Sciatic nerve (tissue), 2 donors: ENCODE measurements at regions of chr7 and their contacts with region 1.

Region 1: DNA sequence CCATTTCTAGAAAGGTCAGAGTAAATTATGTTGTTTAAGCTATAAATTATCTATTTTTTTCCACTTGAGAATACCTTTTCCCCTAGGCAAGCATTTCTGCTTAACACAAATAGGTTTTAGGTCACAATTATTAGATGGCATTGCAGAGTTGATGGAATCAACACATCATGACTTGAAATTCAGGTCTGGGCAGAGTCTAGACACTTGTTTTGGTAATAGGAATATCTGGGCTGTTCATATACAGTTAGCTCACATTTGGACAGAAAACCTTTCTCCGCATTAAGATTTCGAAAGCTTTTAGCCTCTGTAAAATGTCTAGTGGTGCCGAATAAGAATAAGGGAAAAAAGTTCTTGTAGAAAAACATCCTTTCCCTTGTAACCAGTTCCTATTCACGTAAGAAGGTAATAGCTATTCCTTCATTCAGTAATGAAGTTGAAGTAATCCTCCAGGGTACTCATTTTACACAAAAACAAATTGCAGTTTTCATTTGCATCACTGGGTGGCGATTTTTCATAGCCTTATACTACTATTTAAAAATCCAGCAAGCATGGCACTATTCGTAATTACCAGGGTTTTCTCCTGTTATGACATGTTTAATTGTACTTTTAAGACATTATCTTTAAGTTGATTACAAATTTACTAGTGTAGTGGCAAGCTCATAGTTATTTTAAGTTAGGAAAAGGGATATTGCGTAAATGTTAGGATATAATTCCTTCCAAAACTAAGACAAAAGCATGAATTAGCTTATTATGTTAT is 37.0 kb downstream of the RPA3 start:
- DNase-seq: no peak
- ATAC-seq: peak; percentile 90

Region 2: GRCh38 chr7:7696458-7697119 is 15.2 kb after region 1 on chr7:
- intact Hi-C with region 1: no loop called
- DNase-seq: no peak
- ATAC-seq: no peak

Region 3: DNA sequence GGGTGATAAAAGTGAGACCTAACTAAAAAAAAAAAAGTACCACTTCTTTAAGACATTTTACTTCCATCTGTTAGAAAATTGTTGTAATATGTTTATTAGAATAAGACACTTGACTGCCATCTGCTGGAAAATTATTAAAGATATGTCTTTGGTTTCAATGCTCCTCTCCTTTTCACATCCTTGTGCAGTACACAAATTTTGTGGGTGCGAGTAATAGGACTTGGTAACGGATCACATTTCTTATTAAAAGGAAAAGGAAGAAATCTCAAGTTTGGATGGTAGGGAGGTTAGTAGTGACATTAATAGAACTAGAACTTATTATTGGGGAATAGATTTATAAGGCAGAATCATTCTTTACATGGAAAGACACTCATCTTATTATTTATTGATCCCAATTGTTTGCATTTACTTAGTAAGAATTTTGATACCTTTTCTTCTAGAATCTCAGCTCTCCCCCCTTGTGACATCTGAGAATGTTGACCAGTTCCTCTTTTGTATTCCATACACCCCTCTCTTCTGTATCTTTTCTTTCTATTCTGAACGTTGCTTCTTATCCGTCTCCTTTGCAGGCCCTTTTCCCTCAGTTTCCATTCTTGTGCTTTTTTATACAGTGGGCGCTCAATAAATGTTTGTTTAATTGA is 80.1 kb after region 1 on chr7:
- intact Hi-C with region 1: loop called (anchors 5 kb)
- DNase-seq: no peak
- ATAC-seq: peak; percentile 80

Region 4: GRCh38 chr7:7970531-7971307 is 289.4 kb after region 1 on chr7:
- intact Hi-C with region 1: no loop called
- DNase-seq: no peak
- ATAC-seq: no peak